AG04449 (cell line): ENCODE measurements at regions of chr19 and their contacts with region 1.

Region 1: GRCh38 chr19:17938092-17938845 is 5.5 kb downstream of the CCDC124 start:
- DNase-seq: peak; percentile 26
- H3K4me3 ChIP-seq: no peak overlapping the region
- CTCF ChIP-seq: peak; percentile 96

Region 2: GRCh38 chr19:17830567-17831418 is 107.5 kb before region 1 on chr19:
- CTCF ChIA-PET with region 1: no interaction called
- POLR2A ChIA-PET with region 1: no interaction called
- DNase-seq: no peak
- H3K4me3 ChIP-seq: peak overlapping the region; percentile 48
- CTCF ChIP-seq: no peak

Region 3: GRCh38 chr19:17865364-17866311 is 72.6 kb before region 1 on chr19:
- CTCF ChIA-PET with region 1: interaction called, 157 read pairs
- POLR2A ChIA-PET with region 1: interaction called, 14 read pairs
- DNase-seq: no peak
- H3K4me3 ChIP-seq: no peak overlapping the region
- CTCF ChIP-seq: no peak

Region 4: DNA sequence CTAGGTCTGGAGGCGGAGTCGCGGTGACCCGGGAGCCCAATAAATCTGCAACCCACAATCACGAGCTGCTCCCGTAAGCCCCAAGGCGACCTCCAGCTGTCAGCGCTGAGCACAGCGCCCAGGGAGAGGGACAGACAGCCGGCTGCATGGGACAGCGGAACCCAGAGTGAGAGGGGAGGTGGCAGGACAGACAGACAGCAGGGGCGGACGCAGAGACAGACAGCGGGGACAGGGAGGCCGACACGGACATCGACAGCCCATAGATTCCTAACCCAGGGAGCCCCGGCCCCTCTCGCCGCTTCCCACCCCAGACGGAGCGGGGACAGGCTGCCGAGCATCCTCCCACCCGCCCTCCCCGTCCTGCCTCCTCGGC is 66.4 kb before region 1 on chr19 and contains the start of gene SLC5A5:
- CTCF ChIA-PET with region 1: interaction called, 157 read pairs
- POLR2A ChIA-PET with region 1: interaction called, 6 read pairs
- DNase-seq: no peak
- H3K4me3 ChIP-seq: no peak within 1 kb of the TSS
- CTCF ChIP-seq: no peak